T-cell (primary cell): ENCODE measurements at regions of chrX and their contacts with region 1.

Region 1: DNA sequence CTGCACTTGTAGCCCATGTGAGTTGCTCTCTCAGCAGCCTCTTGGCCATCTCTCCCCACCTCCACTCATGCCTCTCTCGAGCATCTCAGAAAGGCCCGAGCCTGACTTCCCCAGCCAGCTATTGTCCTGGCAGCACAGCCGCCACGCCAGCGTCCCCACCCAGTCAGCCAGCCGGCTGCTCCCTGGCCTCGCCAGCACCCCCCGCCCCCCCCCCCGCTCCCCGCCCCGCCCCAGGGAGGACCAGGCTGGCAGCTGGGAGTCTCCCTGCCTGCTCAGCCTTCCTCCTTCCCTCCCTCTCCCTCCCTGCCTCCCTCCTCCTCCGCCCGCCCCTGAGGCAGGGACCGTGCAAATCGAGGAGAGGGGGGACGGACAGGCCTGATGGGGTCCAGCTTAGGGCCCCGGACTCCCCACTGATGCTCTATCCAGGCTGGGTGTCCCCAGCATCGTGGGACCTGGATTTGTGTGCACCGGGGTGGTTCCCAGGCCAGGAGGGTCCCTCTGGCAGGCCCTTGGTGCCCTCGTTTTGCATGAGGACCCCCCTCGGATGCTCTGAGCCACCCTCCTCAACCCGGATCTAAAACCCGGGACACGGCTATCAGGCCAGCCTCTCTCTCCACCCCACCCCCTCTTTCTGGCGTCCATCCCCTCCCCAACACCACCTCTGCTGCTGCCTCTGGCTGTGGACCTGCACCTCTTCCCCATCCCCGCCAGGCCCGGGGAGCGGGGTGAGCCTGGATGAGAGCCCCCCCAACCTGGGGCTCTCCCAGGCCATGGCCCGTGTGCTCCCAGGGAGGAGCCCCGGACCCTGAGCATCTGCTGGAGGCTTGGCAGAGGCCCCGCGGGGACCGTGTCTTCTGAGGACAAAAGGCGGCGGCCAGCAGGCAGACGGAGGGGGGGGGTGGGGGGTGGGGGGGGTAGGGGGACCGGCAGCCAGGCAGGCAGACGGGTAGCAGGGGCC is at the start of gene GPR173:
- DNase-seq: no peak
- ATAC-seq: peak in 1 of 4 experiments; percentile 9
- H3K4me3 ChIP-seq: no peak within 1 kb of the TSS
- H3K4me3 Mint-ChIP-seq: no peak within 1 kb of the TSS
- H3K27ac ChIP-seq: no peak within 1 kb of the TSS
- H3K27ac Mint-ChIP-seq: no peak within 1 kb of the TSS
- H3K4me1 ChIP-seq: peaks cover 0 to 5% of the 10 kb centered on the region in 2 experiments
- H3K4me1 Mint-ChIP-seq: peaks cover 0 to 3% (median 0%) of the 10 kb centered on the region in 3 donors
- H3K27me3 ChIP-seq: peaks cover 0 to 22% of the 10 kb centered on the region in 2 experiments
- H3K27me3 Mint-ChIP-seq: peaks cover 7 to 16% of the 10 kb centered on the region in 2 donors
- total RNA-seq, gene GPR173: 0.12 to 0.50 (median 0.17) TPM in 4 of 5 donors, not detected in the other

Region 2: DNA sequence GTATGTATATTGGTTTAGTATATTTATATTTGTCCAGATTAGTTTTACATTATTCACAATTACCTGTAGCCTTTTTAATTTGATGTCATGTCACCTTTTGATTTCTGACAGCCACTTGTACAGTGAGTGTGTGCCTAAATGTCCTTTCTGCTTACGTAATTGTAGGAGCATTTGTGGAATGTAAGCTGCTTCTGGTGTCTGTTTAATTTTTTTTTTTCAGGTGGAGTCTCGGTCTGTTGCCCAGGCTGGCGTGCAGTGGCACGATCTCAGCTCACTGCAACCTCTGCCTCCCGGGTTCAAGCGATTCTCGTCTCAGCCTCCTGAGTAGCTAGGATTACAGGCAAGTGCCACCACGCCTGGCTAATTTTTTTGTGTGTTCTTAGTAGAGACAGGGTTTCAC is 770.8 kb before region 1 on chrX:
- CTCF ChIA-PET with region 1: interaction called in 1 of 2 experiments, 10 read pairs
- POLR2A ChIA-PET with region 1: no interaction called
- DNase-seq: no peak
- ATAC-seq: no peak
- H3K4me3 ChIP-seq: no peak overlapping the region
- H3K4me3 Mint-ChIP-seq: no peak overlapping the region
- H3K27ac ChIP-seq: no peak overlapping the region
- H3K27ac Mint-ChIP-seq: no peak overlapping the region
- H3K4me1 ChIP-seq: no peaks in the 10 kb centered on the region
- H3K4me1 Mint-ChIP-seq: no peaks in the 10 kb centered on the region
- H3K27me3 ChIP-seq: peaks cover 0 to 2% of the 10 kb centered on the region in 2 experiments
- H3K27me3 Mint-ChIP-seq: peaks cover 10 to 43% of the 10 kb centered on the region in 2 donors

Region 3: DNA sequence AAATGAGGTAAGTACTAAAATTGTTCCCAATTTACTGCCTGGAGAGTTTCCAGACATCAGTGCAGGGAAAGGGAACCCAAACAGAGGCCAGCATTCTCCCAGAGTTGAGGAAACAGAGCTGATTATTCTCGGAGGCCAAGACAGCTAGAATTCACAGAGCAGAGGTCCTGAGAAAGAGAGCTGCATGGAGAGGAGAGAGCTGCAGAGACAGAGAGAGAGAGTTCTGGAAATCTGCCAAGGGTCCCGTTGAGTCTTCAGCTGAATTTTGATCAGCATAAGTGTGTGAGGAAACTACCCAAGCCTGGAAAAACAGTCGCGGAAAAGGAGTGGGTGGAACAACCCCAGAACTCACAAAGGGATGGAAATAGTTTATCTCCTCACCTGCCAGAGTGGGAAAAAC is 43.6 kb before region 1 on chrX:
- CTCF ChIA-PET with region 1: no interaction called
- POLR2A ChIA-PET with region 1: no interaction called
- DNase-seq: no peak
- ATAC-seq: no peak
- H3K4me3 ChIP-seq: no peak overlapping the region
- H3K4me3 Mint-ChIP-seq: no peak overlapping the region
- H3K27ac ChIP-seq: no peak overlapping the region
- H3K27ac Mint-ChIP-seq: no peak overlapping the region
- H3K4me1 ChIP-seq: peaks cover 0 to 7% of the 10 kb centered on the region in 2 experiments
- H3K4me1 Mint-ChIP-seq: peaks cover 0 to 6% (median 0%) of the 10 kb centered on the region in 3 donors
- H3K27me3 ChIP-seq: peaks cover 0 to 19% of the 10 kb centered on the region in 2 experiments
- H3K27me3 Mint-ChIP-seq: peaks cover 15 to 49% of the 10 kb centered on the region in 2 donors

Region 4: DNA sequence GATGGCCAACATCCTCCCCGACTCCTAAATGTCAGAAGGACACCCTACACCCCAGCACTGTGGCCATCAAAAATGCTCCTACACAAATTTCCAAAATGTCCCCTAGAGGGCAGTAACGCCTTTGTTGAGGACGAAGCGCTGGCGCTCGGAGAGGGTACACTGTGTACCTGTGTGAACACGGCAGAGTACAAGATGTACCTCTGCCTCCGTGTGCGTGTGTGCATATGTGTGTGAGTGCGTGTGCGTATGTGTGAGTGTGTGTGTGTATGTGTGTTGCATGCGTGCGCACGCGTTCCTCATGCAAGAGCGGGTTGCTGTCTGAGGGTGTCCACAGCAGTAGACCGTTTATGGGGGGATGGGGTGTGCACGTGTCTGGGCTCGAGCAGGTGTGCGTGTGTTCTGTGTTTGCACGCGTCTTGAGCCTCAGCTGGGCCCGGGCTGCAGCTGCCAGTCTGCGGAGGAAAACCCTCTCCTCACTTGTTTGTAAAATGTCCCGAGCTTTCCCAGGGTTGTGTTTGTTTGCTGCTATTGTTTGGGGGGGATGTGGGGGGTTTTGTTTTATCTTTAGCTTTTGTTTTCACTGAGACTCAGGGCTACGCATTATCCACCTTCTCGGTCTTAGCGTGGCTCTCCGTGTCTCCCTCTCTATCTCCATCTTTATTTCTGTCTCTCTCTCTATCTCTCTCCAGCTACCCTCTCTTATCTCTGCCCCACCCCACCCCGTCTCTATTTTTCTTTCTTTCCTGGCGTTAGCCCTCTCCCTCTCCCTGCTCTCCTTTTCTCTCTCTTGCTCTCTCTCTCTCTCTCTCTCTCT is 23.4 kb after region 1 on chrX:
- CTCF ChIA-PET with region 1: no interaction called
- POLR2A ChIA-PET with region 1: no interaction called
- DNase-seq: peak; percentile 49 to 87 (median 65)
- ATAC-seq: peak; percentile 89 to 90 (median 90)
- H3K4me3 ChIP-seq: peak overlapping the region; percentile 20 to 57
- H3K4me3 Mint-ChIP-seq: peak overlapping the region; percentile 71 to 85 (median 82)
- H3K27ac ChIP-seq: peak overlapping the region; percentile 41
- H3K27ac Mint-ChIP-seq: peak overlapping the region; percentile 46 to 84
- H3K4me1 ChIP-seq: peaks cover 0 to 9% of the 10 kb centered on the region in 2 experiments
- H3K4me1 Mint-ChIP-seq: peaks cover 16 to 20% (median 18%) of the 10 kb centered on the region in 3 donors
- H3K27me3 ChIP-seq: no peaks in the 10 kb centered on the region
- H3K27me3 Mint-ChIP-seq: peaks cover 0 to 3% of the 10 kb centered on the region in 2 donors

Region 5: GRCh38 chrX:53817548-53817947 is 769.1 kb after region 1 on chrX:
- CTCF ChIA-PET with region 1: no interaction called
- POLR2A ChIA-PET with region 1: no interaction called
- DNase-seq: no peak
- ATAC-seq: no peak
- H3K4me3 ChIP-seq: no peak overlapping the region
- H3K4me3 Mint-ChIP-seq: no peak overlapping the region
- H3K27ac ChIP-seq: no peak overlapping the region
- H3K27ac Mint-ChIP-seq: no peak overlapping the region
- H3K4me1 ChIP-seq: no peaks in the 10 kb centered on the region
- H3K4me1 Mint-ChIP-seq: peaks cover 0 to 5% (median 0%) of the 10 kb centered on the region in 3 donors
- H3K27me3 ChIP-seq: no peaks in the 10 kb centered on the region
- H3K27me3 Mint-ChIP-seq: peaks cover 0 to 11% of the 10 kb centered on the region in 2 donors